ENCODE measurements at regions of chr13 and their contacts with region 1.

Region 1: DNA sequence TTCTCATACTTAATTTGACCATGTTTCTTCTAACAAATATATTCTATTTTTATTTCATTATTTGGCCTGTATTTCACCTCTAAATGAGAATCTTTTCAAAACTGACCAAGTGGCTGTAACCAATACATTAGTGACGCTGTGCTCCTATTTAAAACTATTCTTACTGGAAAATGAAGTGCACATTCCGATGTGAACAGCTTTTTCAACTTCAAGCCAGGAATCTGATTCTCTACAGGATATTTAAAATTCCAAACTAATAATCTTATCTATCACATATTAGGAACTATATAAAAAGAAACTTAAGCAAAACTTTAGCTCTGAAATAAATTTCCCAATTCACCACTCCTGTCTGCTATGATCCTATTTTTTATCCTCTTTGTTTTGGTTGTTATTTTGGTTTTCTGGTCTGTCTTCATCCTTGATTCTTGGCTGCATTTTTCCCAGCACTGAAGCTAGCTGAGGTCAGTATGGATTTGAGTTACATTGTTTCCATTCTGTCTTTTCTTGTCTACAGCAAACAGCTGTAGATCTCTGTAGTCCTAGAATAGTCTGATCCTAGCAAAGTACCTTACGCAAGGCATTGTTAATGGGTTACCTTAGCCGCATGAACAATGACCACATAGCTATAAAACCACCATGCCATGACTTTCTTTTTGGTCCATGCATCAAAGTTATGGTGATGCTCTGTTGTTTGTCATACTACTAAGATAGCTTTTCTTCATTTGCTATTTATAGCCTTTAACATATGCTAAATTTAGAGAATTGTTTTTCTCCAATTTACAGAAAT is 748.6 kb upstream of the SPRY2 start:
- DNase-seq: no peak
- H3K4me3 ChIP-seq: no peak overlapping the region
- H3K27ac ChIP-seq: no peak overlapping the region
- H3K27me3 ChIP-seq: no peaks in the 10 kb centered on the region
- CTCF ChIP-seq: no peak

Region 2: DNA sequence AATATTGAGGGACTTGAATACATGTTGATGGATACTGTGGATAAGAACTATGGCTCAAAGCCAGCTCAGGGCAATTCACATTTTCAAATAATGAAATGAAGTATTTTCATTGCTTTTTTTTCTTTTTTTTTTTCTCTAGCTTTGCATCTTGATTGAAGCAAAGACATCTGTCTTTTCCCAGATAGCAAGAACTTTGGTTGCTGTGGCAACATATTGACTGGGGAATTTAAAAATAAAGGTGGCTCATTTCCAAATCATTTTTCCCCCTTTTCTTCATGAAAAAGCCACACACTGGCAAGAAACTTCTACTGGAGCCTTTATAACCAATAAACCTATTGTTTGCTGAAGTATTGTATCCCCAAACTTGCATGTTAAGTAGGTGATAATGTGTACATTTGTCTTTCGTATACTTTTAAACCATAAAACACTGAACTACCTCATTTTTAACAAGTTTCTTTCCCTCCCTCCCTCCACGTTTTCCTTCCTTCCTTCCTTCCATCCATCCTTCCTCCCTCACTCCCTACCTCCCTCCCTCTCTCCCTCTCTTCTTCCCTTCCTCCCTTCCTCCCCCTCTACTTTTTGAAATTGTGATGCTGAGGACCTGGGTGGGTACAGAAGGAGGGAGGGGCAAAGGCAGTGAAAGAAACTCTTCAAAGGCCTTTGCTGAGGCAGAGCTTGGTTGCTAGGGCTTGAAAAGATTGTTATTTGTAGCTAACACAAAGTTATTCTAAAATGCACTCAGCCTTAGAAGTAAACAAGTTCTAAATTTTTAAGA is 405.2 kb before region 1 on chr13:
- CTCF ChIA-PET with region 1: no interaction called
- POLR2A ChIA-PET with region 1: no interaction called
- DNase-seq: no peak
- H3K4me3 ChIP-seq: no peak overlapping the region
- H3K27ac ChIP-seq: no peak overlapping the region
- H3K27me3 ChIP-seq: no peaks in the 10 kb centered on the region
- CTCF ChIP-seq: no peak

Region 3: DNA sequence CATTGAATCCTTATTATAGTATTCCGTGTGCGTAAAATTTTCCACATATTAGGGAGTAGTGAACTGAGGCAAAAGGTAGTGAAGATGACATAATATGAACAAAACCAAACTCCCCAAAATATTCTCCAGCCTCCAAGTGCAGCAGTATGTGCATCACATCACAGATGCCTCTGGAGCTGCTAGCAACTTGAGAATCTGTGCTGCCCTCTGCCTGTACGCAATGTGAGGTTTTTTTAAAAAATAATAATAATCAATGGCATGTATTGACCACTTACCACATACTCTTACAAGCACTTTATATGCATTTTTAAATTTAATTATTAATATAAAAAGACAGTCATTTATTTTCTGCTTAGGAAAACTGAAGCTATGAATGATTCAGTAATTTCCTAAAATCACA is 165.7 kb before region 1 on chr13:
- CTCF ChIA-PET with region 1: no interaction called
- POLR2A ChIA-PET with region 1: no interaction called
- DNase-seq: no peak
- H3K4me3 ChIP-seq: no peak overlapping the region
- H3K27ac ChIP-seq: no peak overlapping the region
- H3K27me3 ChIP-seq: no peaks in the 10 kb centered on the region
- CTCF ChIP-seq: no peak

Region 4: GRCh38 chr13:81106348-81106747 is 16.8 kb after region 1 on chr13:
- CTCF ChIA-PET with region 1: interaction called, 5 read pairs
- POLR2A ChIA-PET with region 1: interaction called, 11 read pairs
- DNase-seq: no peak
- H3K4me3 ChIP-seq: no peak overlapping the region
- H3K27ac ChIP-seq: no peak overlapping the region
- H3K27me3 ChIP-seq: no peaks in the 10 kb centered on the region
- CTCF ChIP-seq: no peak

Measured in AG04450 (cell line).